Dorsolateral prefrontal cortex (tissue), 120 donors: ENCODE measurements at regions of chr3 and their contacts with region 1.

Region 1: DNA sequence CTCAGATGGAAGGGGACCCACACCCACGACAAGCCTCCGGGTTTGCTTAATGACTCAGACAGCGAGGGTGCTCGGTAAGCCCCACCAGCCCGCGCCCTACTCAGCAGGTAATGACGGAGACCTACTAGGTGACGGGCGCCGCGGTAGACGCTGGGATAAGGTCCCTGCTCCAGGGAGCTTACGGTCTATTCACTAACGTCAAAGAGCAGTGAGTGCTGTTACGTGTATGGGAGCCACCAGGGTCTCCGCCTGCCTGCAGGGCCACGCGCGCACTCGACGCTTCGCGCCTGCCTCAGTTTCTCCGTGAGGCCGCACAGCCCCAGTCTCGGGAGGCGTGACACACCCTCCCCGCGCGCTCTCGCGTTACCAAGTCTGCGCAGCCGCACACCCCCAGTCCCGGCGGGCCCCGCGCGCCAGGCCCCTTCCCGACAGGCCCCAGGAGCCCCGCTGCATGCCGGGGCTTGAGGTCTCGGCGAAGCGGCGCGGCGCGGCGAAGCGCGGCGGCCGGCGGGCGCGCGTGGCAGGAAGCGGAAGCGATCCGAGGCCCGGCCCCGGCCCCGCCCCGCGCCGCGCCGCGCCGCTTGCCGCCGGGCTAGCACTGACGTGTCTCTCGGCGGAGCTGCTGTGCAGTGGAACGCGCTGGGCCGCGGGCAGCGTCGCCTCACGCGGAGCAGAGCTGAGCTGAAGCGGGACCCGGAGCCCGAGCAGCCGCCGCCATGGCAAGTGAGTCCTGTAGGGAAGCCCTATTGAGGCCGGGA is at the start of gene SEC61A1:
- DNase-seq: peak; percentile 85 to 96 (median 88)
- H3K4me3 ChIP-seq: peak within 1 kb of the TSS; percentile 76 to 100 (median 97)
- H3K27ac ChIP-seq: peak within 1 kb of the TSS in 58 of 59 donors; percentile 11 to 96 (median 86)
- H3K27me3 ChIP-seq: no peaks in the 10 kb centered on the region
- CTCF ChIP-seq: peak in 21 of 56 donors; percentile 3 to 46 (median 20)
- total RNA-seq, gene SEC61A1: 46.8 to 92.6 (median 61.3) TPM

Region 2: GRCh38 chr3:127590593-127591477 is 461.2 kb before region 1 on chr3 and contains the start of gene TPRA1:
- intact Hi-C with region 1: loop called in 1 of 2 experiments (anchors 5 kb)
- DNase-seq: peak; percentile 64 to 95 (median 90)
- H3K4me3 ChIP-seq: peak within 1 kb of the TSS; percentile 54 to 99 (median 92)
- H3K27ac ChIP-seq: peak within 1 kb of the TSS; percentile 58 to 96 (median 88)
- H3K27me3 ChIP-seq: no peaks in the 10 kb centered on the region
- CTCF ChIP-seq: peak in 42 of 56 donors; percentile 4 to 65 (median 36)
- total RNA-seq, gene TPRA1: 19.2 to 39.2 (median 24.6) TPM

Region 3: DNA sequence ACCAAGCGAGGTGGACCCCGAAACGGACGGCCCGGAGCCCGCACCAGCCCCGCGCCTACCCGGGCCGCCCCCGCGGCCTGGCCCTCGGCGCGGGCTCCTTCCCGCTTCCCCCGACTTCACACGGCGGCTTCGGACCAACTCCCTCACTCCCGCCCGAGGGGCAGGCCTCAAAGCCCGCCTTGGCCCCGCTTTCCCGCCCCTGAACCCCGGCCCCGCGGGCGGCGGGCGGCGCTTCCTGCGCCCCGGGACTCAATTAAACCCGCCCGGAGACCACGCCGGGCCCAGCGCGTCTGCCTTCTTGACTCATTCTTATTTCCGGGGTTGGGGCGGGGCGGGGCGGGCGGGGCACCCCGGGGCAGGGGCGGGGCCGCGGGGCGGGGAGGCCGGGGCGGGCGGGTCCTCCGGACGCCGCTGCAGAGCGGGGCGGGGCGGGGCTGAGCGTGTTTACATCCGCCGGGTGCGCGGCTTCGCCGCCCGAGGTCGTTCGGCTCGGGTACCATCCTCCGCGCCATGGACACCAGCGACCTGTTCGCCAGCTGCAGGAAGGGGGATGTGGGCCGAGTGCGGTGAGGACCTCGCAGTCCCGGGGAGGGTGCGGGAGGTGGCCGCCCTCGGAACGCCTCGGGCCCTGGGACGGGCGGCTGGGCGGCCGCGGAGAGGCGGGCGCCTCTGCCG is 379.4 kb before region 1 on chr3 and contains the start of gene ABTB1:
- intact Hi-C with region 1: loop called in 1 of 2 experiments (anchors 10 kb)
- DNase-seq: peak; percentile 67 to 88 (median 75)
- H3K4me3 ChIP-seq: peak within 1 kb of the TSS; percentile 60 to 98 (median 87)
- H3K27ac ChIP-seq: peak within 1 kb of the TSS; percentile 75 to 97 (median 91)
- H3K27me3 ChIP-seq: no peaks in the 10 kb centered on the region
- CTCF ChIP-seq: peak in 3 of 56 donors; percentile 18 to 26 (median 21)
- total RNA-seq, gene ABTB1: 63.6 to 129 (median 87.7) TPM

Region 4: GRCh38 chr3:127697551-127698240 is 354.3 kb before region 1 on chr3:
- intact Hi-C with region 1: loop called in 1 of 2 experiments (anchors 10 kb)
- DNase-seq: peak; percentile 76 to 92 (median 82)
- H3K4me3 ChIP-seq: peak overlapping the region in 58 of 59 donors; percentile 11 to 68 (median 46)
- H3K27ac ChIP-seq: peak overlapping the region; percentile 71 to 97 (median 91)
- H3K27me3 ChIP-seq: no peaks in the 10 kb centered on the region
- CTCF ChIP-seq: peak in 8 of 56 donors; percentile 5 to 26 (median 18)

Region 5: DNA sequence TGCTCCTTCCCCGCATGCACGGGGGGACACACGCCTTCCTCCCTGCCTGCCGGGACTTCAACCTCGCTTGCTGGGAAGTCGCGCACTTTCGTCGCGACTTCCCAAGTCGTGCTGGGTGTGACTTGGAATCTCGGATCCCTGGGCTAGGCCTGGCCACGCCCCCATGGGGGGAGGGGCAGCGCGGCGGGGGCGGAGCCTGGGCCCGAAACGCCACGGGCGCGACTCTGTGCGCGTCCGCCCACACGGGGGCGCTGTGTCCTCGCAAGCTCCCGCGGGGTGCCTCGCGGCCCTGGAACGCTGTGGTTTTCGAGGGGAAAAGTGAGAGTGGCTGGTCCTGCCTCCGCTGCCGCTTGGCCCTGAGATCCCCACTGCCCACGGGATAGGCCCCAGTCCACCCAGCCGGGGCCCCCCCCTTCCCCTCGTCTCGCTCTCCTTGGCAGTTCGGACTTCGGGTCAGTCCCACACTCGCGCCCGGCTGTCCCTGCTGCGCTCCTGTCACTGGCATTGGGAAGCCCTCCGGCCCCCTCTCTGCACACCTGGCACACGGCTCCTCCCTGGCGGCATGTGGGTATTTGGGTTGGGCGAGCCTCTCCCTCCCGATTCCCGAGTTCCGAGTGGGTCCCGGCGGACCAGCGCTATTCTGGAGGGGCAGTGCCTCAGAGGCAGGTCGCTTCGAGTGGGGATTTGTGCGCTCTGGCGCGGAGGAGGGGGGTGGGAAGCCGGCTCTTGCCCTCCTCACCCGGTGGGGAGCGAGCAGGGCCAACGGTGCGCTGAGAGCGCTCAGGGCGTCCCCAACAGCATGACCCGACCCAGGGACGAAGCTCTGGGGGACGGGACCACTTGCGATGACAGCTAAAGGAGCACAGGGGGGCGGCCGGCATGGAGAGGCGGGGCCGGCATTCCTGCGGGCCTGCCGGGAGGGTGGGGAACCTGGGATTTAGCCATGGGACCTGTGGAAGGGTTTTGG is 23.8 kb after region 1 on chr3:
- intact Hi-C with region 1: loop called in 1 of 2 experiments (anchors 2 kb)
- DNase-seq: peak; percentile 84 to 94 (median 90)
- H3K4me3 ChIP-seq: peak overlapping the region; percentile 45 to 79 (median 68)
- H3K27ac ChIP-seq: peak overlapping the region in 55 of 59 donors; percentile 4 to 89 (median 76)
- H3K27me3 ChIP-seq: no peaks in the 10 kb centered on the region
- CTCF ChIP-seq: peak; percentile 74 to 98 (median 94)

Region 6: GRCh38 chr3:128123538-128124368 is 71.7 kb after region 1 on chr3 and contains the start of gene RUVBL1:
- intact Hi-C with region 1: loop called in 1 of 2 experiments (anchors 5 kb)
- DNase-seq: peak; percentile 90 to 99 (median 98)
- H3K4me3 ChIP-seq: peak within 1 kb of the TSS; percentile 71 to 100 (median 88)
- H3K27ac ChIP-seq: peak within 1 kb of the TSS in 50 of 59 donors; percentile 4 to 81 (median 64)
- H3K27me3 ChIP-seq: peaks cover 0 to 4% (median 0%) of the 10 kb centered on the region in 45 donors
- CTCF ChIP-seq: peak in 31 of 56 donors; percentile 6 to 55 (median 27)
- total RNA-seq, gene RUVBL1: 13.0 to 28.3 (median 18.2) TPM